PC-3 (cell line): ENCODE measurements at regions of chr3 and their contacts with region 1.

Region 1: DNA sequence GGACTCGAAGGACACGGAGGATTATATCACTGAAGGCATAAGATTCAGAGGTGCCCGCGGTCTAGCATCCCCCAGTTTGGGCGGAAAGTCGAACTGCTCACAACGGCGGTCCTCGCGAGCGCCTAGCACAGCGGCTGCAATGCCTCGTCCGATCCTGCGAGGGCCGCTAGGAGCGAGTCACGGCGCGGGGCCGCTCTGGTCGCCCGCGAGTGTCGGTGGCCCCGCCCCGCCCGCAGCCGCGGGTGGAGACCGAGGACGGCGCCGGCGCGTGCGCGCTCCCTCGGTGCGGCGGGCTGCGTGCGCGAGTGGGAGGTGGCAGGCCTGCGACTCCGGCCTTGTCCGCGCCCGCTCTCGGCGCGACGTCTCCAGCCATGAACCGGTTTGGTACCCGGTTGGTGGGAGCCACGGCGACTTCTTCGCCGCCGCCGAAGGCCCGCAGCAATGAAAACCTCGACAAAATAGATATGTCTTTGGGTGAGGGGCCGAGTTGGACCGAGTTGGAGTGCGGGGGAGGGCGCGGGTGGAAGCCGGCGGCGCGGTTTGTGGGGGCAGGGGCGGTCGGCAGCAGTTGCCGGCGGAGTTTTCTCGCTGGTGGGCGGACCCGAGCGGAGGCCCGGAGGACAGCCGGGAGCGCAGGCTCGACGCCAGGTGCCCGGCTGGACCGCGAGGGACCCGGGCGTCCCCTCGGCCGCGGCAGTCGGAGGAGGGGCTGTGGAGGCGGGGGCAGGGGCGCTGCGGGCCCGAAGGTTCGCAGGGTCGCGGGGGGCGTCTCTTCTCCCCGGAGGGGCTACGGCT is at the start of gene FYTTD1:
- DNase-seq: peak; percentile 91
- ATAC-seq: peak; percentile 85
- H3K4me3 ChIP-seq: peak within 1 kb of the TSS; percentile 74
- H3K27ac ChIP-seq: peak within 1 kb of the TSS; percentile 72
- H3K4me1 ChIP-seq: peaks cover 21% of the 10 kb centered on the region
- H3K27me3 ChIP-seq: no peaks in the 10 kb centered on the region
- CTCF ChIP-seq: peak; percentile 40
- total RNA-seq, gene FYTTD1: 54.6 and 85.4 TPM in 2 replicates

Region 2: DNA sequence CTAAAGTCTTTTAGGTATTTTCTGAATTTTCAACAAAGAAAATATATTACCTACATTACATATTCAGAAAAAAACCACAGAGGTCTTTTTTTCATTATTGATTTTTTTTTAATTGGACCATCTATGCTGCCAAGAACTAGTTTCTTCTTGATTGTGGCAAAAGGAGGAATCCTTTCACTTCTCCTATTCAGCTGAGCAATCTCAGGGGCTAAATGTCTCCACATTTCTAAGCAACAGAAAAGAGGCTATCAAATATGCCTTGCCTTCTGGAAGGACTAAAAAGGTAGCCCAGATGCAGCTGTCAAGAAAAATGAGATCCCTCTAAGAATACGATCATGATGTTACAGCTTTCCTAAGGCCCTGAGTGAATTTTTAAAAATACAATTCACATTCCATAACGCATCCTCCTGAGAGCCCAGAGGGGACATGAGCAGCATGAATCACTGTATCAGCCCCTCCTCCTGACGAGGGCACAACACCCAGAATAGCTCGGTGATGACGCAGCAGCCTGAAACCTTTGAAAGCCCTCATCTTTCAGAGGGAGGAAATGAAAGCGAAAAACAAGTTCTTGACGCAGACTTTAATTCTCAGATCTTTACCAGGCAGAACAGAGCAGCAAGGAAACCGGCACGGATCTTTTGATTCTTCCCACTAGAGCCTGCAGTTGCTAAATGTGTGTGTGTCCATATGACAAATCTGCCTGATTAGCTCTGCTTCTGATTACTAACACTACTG is 37.7 kb before region 1 on chr3:
- CTCF ChIA-PET with region 1: no interaction called
- POLR2A ChIA-PET with region 1: interaction called, 3 read pairs
- intact Hi-C with region 1: loop called (anchors 5 kb)
- DNase-seq: peak; percentile 99
- ATAC-seq: peak; percentile 100
- H3K4me3 ChIP-seq: peak overlapping the region; percentile 53
- H3K27ac ChIP-seq: peak overlapping the region; percentile 92
- H3K4me1 ChIP-seq: peaks cover 19% of the 10 kb centered on the region
- H3K27me3 ChIP-seq: no peaks in the 10 kb centered on the region
- CTCF ChIP-seq: no peak

Region 3: GRCh38 chr3:197725524-197725923 is 24.3 kb before region 1 on chr3:
- CTCF ChIA-PET with region 1: no interaction called
- POLR2A ChIA-PET with region 1: no interaction called
- intact Hi-C with region 1: no loop called
- DNase-seq: no peak
- ATAC-seq: no peak
- H3K4me3 ChIP-seq: no peak overlapping the region
- H3K27ac ChIP-seq: no peak overlapping the region
- H3K4me1 ChIP-seq: peaks cover 9% of the 10 kb centered on the region
- H3K27me3 ChIP-seq: no peaks in the 10 kb centered on the region
- CTCF ChIP-seq: no peak

Region 4: DNA sequence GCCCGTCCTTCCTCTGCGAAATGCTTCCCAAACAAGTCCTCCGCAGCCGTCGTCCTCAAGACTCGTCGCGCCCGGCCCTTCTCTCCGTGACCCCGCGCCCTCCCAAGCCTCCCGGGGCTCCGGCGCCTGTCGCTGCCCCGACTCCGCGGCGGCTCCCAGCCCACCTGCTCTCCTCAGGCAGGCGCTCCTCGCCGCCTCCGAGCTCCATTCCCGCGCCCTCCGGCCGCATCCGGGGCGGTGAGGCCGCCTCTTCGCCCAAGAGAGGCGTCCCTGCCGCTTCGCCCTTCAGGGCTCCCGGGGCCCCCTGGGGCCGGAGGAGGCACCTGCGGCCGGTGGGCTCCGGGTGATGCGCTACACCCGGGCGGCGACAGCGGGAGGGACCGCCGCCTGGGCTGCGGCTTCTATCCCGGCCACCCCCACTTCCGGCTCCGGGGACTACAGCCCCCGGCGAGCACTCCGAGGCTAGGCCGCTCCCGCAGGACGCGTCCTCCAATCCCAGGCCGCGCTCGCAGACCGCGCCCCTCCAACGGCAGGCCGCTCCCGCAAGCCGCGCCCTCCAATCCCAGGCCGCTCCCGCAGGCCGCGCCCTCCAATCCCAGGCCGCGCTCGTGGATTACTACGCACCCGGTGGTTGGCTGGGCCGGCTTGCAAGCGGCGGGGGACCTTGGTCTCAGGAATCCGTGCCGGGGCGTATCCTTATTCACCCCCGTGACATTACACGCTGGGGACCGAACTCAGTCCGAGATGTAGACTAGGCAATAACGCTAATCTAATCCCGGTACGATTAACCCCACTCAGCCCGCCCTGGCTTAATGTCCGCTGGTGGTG is 13.1 kb before region 1 on chr3 and contains the start of gene RUBCN:
- CTCF ChIA-PET with region 1: interaction called, 3 read pairs
- POLR2A ChIA-PET with region 1: no interaction called
- intact Hi-C with region 1: loop called (anchors 1 kb)
- DNase-seq: peak; percentile 97
- ATAC-seq: peak; percentile 98
- H3K4me3 ChIP-seq: peak within 1 kb of the TSS; percentile 97
- H3K27ac ChIP-seq: peak within 1 kb of the TSS; percentile 30
- H3K4me1 ChIP-seq: peaks cover 18% of the 10 kb centered on the region
- H3K27me3 ChIP-seq: no peaks in the 10 kb centered on the region
- CTCF ChIP-seq: no peak
- total RNA-seq, gene RUBCN: 24.5 and 32.9 TPM in 2 replicates

Region 5: GRCh38 chr3:197791113-197791891 is 41.5 kb after region 1 on chr3 and contains the start of gene LRCH3:
- CTCF ChIA-PET with region 1: interaction called, 3 read pairs
- POLR2A ChIA-PET with region 1: no interaction called
- intact Hi-C with region 1: loop called (anchors 5 kb)
- DNase-seq: peak; percentile 68
- ATAC-seq: peak; percentile 74
- H3K4me3 ChIP-seq: peak within 1 kb of the TSS; percentile 81
- H3K27ac ChIP-seq: peak within 1 kb of the TSS; percentile 75
- H3K4me1 ChIP-seq: peaks cover 26% of the 10 kb centered on the region
- H3K27me3 ChIP-seq: no peaks in the 10 kb centered on the region
- CTCF ChIP-seq: no peak
- total RNA-seq, gene LRCH3: 43.1 and 146 TPM in 2 replicates

Region 6: GRCh38 chr3:197889204-197889930 is 139.6 kb after region 1 on chr3:
- CTCF ChIA-PET with region 1: no interaction called
- POLR2A ChIA-PET with region 1: no interaction called
- intact Hi-C with region 1: no loop called
- DNase-seq: peak; percentile 69
- ATAC-seq: peak; percentile 31; the same call in 1 of the 2 replicates
- H3K4me3 ChIP-seq: no peak overlapping the region
- H3K27ac ChIP-seq: 0 out of 2 replicates have a peak overlapping the region, but pooled peaks have one; percentile 11
- H3K4me1 ChIP-seq: peaks cover 15% of the 10 kb centered on the region
- H3K27me3 ChIP-seq: no peaks in the 10 kb centered on the region
- CTCF ChIP-seq: no peak